Right cardiac atrium (tissue), 5 donors: ENCODE measurements at regions of chr20 and their contacts with region 1.

Region 1: DNA sequence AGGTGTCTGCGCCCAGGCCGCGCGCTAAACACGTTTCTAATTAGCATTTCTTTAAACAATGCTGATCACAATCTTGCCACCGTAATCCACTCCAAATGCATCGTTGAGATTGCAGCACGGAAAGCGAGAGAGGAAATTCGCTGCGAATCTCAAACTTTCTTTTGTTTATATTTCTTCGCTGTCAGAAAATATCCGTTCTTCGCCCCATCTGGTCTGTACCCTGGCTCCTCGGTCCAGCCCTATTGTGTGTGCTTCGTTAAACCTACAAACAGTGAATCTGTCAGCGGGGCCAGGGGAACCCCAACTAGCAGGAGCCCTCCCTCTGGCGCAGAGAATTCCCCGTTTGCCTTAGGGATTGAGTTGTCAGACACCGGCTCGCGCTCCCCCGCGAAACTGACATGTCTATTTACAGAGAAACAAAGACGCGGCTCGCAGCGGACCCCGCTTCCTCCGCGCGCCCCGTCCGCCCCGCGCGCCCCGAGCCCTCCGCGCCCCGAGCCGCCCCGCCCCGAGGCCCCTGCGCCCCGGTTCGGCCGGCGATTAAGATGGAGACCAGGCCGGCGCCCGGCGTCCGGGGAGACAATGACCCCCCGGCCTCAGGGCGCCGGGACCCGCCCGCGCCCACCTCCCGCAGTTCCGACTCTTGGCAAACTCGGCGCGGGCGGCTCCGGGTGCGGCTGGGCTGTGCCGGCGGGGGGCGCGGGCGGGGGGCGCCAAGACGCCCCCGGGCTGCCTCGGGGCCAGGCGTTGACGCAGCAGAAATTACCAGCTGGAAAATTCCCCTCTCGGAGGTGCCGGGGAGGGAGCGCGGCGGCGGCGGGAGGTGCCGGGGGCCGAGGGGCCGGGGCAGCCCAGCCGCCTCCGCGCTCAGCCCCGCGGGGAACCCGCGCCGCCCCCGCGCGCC is 880 bp downstream of the ZBTB46 start:
- DNase-seq: peak in 1 of 3 donors; percentile 71
- ATAC-seq: no peak
- H3K4me3 ChIP-seq: peak overlapping the region; percentile 94
- H3K27ac ChIP-seq: peak overlapping the region; percentile 53
- H3K4me1 ChIP-seq: peaks cover 10% of the 10 kb centered on the region
- H3K27me3 ChIP-seq: no peaks in the 10 kb centered on the region

Region 2: GRCh38 chr20:63791497-63792156 is 38.6 kb before region 1 on chr20:
- intact Hi-C with region 1: loop called in 1 of 4 experiments (anchors 5 kb)
- DNase-seq: peak; percentile 70 to 86 (median 86)
- ATAC-seq: peak; percentile 17 to 59
- H3K4me3 ChIP-seq: no peak overlapping the region
- H3K27ac ChIP-seq: peak overlapping the region; percentile 75
- H3K4me1 ChIP-seq: peaks cover 7% of the 10 kb centered on the region
- H3K27me3 ChIP-seq: no peaks in the 10 kb centered on the region

Region 3: GRCh38 chr20:63802469-63803240 is 27.5 kb before region 1 on chr20:
- intact Hi-C with region 1: no loop called
- DNase-seq: peak in 1 of 3 donors; percentile 38
- ATAC-seq: no peak
- H3K4me3 ChIP-seq: no peak overlapping the region
- H3K27ac ChIP-seq: no peak overlapping the region
- H3K4me1 ChIP-seq: no peaks in the 10 kb centered on the region
- H3K27me3 ChIP-seq: no peaks in the 10 kb centered on the region